CD8-positive, alpha-beta memory T cell (primary cell): ENCODE measurements at regions of chr20 and their contacts with region 1.

Region 1: GRCh38 chr20:35463455-35464300 is 8.3 kb downstream of the CEP250 start:
- DNase-seq: peak; percentile 26 to 65 (median 49)
- H3K4me3 ChIP-seq: no peak overlapping the region
- H3K4me3 Mint-ChIP-seq: no peak overlapping the region
- H3K27ac ChIP-seq: no peak overlapping the region
- H3K27ac Mint-ChIP-seq: peak overlapping the region in 4 of 8 donors; percentile 11 to 54 (median 31)
- H3K4me1 ChIP-seq: no peaks in the 10 kb centered on the region
- H3K4me1 Mint-ChIP-seq: peaks cover 4 to 6% (median 5%) of the 10 kb centered on the region in 3 donors
- H3K27me3 ChIP-seq: no peaks in the 10 kb centered on the region
- H3K27me3 Mint-ChIP-seq: no peaks in the 10 kb centered on the region

Region 2: DNA sequence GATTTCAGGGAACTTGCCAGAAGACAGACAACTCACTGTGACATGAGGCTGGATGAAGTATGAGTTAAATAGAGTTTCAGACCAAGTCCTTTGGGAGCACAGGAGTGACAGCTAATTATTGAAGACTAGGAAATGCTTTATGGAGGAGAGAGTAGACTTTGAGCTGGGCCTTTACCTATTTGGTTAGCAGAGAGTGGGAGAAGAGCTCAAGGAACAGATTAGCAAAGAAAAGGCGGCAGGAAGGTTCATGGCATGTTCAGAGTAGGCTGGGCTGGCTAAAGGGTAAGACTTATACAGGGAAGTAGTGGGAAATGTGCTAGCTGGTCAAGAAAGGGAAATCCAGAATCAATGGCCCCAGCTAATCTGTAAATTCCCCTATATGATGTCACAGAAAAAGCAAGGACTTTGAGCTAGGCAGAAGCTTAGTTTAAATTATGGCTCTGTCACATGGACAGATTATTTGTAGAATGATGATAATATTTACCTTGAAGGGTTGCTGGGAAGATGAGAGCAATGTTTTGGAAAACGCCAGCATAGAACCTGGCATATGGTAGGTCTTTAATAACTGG is 10.7 kb after region 1 on chr20:
- CTCF ChIA-PET with region 1: interaction called, 15 read pairs
- POLR2A ChIA-PET with region 1: no interaction called
- DNase-seq: no peak
- H3K4me3 ChIP-seq: no peak overlapping the region
- H3K4me3 Mint-ChIP-seq: no peak overlapping the region
- H3K27ac ChIP-seq: no peak overlapping the region
- H3K27ac Mint-ChIP-seq: no peak overlapping the region
- H3K4me1 ChIP-seq: no peaks in the 10 kb centered on the region
- H3K4me1 Mint-ChIP-seq: peaks cover 0 to 7% (median 4%) of the 10 kb centered on the region in 3 donors
- H3K27me3 ChIP-seq: no peaks in the 10 kb centered on the region
- H3K27me3 Mint-ChIP-seq: no peaks in the 10 kb centered on the region

Region 3: DNA sequence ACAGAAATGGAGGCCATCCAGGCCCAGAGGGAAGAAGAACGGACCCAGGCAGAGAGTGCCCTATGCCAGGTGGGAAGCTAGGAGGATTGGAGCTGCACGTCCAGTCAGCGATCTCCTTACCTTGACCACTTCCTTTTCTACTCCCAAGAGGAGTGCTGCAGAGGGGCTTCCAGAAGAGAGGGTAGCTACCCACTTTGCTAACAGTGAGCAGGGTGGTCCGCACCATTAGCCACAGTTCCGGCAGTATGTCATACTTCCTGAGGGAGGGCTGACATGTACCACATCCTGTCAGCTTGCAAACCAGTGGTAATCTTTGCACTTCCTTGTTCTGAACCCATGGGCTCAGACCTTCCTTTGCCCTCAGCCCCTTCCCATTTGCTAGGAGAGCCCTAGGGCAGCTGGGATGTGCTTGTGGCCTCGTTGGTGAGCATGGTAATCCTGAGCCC is 27.1 kb after region 1 on chr20:
- CTCF ChIA-PET with region 1: interaction called, 10 read pairs
- POLR2A ChIA-PET with region 1: interaction called, 5 read pairs
- DNase-seq: peak; percentile 42 to 81 (median 68)
- H3K4me3 ChIP-seq: peak overlapping the region; percentile 99
- H3K4me3 Mint-ChIP-seq: peak overlapping the region; percentile 96 to 99 (median 99)
- H3K27ac ChIP-seq: peak overlapping the region; percentile 96
- H3K27ac Mint-ChIP-seq: peak overlapping the region; percentile 95 to 99 (median 99)
- H3K4me1 ChIP-seq: peaks cover 49% of the 10 kb centered on the region
- H3K4me1 Mint-ChIP-seq: peaks cover 59 to 80% (median 68%) of the 10 kb centered on the region in 3 donors
- H3K27me3 ChIP-seq: no peaks in the 10 kb centered on the region
- H3K27me3 Mint-ChIP-seq: no peaks in the 10 kb centered on the region

Region 4: GRCh38 chr20:35511814-35512420 is 48.2 kb after region 1 on chr20:
- CTCF ChIA-PET with region 1: no interaction called
- POLR2A ChIA-PET with region 1: no interaction called
- DNase-seq: no peak
- H3K4me3 ChIP-seq: no peak overlapping the region
- H3K4me3 Mint-ChIP-seq: no peak overlapping the region
- H3K27ac ChIP-seq: no peak overlapping the region
- H3K27ac Mint-ChIP-seq: peak overlapping the region in 6 of 8 donors; percentile 1 to 69 (median 50)
- H3K4me1 ChIP-seq: no peaks in the 10 kb centered on the region
- H3K4me1 Mint-ChIP-seq: peaks cover 3% of the 10 kb centered on the region in 3 donors
- H3K27me3 ChIP-seq: no peaks in the 10 kb centered on the region
- H3K27me3 Mint-ChIP-seq: peaks cover 0 to under 1% of the 10 kb centered on the region in 2 donors

Region 5: DNA sequence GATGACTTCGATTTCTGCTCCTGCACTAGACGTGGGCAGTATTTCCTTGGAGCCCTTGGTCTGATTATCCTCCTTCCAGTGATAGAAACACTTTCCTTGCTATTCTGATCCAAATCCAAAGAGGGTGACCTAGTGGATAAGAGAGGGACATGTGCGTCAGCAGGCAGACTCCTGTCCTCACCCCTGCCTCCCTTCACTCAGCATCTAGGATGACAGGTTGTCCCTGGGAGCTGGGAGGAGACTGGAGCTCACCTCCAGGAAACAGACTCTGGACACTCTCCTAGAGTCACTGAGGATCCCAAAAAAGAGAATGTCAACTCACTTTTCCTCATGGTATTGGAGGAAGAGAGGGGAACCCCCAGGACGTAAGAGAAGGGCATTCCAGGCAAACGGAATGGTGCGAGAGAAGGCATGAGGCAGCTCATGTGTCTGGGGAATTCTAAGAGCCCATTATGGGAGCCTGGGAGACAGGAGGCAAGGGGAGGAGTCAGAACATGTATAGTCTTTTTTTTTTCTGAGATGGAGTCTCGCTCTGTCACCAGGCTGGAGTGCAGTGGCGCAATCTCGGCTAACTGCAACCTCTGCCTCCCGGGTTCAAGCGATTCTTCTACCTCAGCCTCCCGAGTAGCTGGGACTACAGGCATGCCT is 63.6 kb after region 1 on chr20:
- CTCF ChIA-PET with region 1: no interaction called
- POLR2A ChIA-PET with region 1: no interaction called
- DNase-seq: no peak
- H3K4me3 ChIP-seq: no peak overlapping the region
- H3K4me3 Mint-ChIP-seq: no peak overlapping the region
- H3K27ac ChIP-seq: no peak overlapping the region
- H3K27ac Mint-ChIP-seq: peak overlapping the region in 2 of 8 donors; percentile 27 to 29
- H3K4me1 ChIP-seq: no peaks in the 10 kb centered on the region
- H3K4me1 Mint-ChIP-seq: no peaks in the 10 kb centered on the region
- H3K27me3 ChIP-seq: no peaks in the 10 kb centered on the region
- H3K27me3 Mint-ChIP-seq: peaks cover 0 to 3% of the 10 kb centered on the region in 2 donors

Region 6: GRCh38 chr20:35917077-35917476 is 453.4 kb after region 1 on chr20:
- CTCF ChIA-PET with region 1: no interaction called
- POLR2A ChIA-PET with region 1: no interaction called
- DNase-seq: no peak
- H3K4me3 ChIP-seq: no peak overlapping the region
- H3K4me3 Mint-ChIP-seq: no peak overlapping the region
- H3K27ac ChIP-seq: no peak overlapping the region
- H3K27ac Mint-ChIP-seq: peak overlapping the region in 1 of 8 donors; percentile 52
- H3K4me1 ChIP-seq: no peaks in the 10 kb centered on the region
- H3K4me1 Mint-ChIP-seq: peaks cover 0 to 4% (median 3%) of the 10 kb centered on the region in 3 donors
- H3K27me3 ChIP-seq: no peaks in the 10 kb centered on the region
- H3K27me3 Mint-ChIP-seq: no peaks in the 10 kb centered on the region

Region 7: DNA sequence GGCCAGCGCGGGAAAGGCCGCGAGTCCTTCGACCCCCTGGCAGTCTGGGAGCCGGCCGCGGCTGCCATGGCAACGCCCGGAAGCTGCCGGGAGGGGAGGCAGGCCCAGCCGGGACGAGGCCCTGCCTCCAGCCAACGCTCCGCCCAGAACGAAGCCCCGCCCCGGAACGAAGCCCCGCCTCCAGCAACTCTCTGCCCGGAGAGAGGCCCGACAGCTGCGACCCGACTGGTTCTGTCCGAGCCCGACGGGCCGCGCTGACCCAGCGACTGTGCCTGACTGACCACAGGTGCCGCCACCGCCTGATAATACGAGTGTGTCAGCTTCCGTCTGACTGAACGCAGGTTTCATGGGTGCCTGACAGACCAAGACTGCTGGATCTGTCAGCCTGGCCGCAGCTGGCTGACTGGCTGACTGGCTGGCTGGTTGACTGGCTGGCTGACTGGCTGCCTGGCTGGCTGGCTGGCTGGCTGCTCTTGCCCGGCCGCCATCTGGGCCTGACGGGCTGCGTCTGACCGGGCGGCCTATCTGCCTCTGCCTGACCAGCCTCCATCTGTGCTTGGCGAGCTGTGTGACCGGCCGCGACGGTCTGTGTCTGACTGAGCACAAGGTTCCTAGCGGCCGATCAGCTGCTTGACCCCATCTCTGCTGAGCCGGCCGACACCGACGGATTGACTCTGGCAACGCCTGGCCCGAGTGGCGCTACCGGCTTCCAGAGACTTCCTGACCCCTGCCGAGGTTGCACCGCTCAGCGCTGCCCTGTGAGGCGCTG is 601.2 kb after region 1 on chr20:
- CTCF ChIA-PET with region 1: no interaction called
- POLR2A ChIA-PET with region 1: no interaction called
- DNase-seq: peak; percentile 90 to 95 (median 93)
- H3K4me3 ChIP-seq: peak overlapping the region; percentile 83
- H3K4me3 Mint-ChIP-seq: peak overlapping the region; percentile 88 to 95 (median 90)
- H3K27ac ChIP-seq: peak overlapping the region; percentile 54
- H3K27ac Mint-ChIP-seq: peak overlapping the region in 7 of 8 donors; percentile 50 to 91 (median 83)
- H3K4me1 ChIP-seq: peaks cover 4% of the 10 kb centered on the region
- H3K4me1 Mint-ChIP-seq: peaks cover 0 to 4% (median 0%) of the 10 kb centered on the region in 3 donors
- H3K27me3 ChIP-seq: no peaks in the 10 kb centered on the region
- H3K27me3 Mint-ChIP-seq: peaks cover 5 to 13% of the 10 kb centered on the region in 2 donors